ENCODE measurements at regions of chr5 and their contacts with region 1.

Region 1: GRCh38 chr5:75053304-75054133 is 1.2 kb upstream of the GCNT4 start:
- DNase-seq: peak; percentile 71
- H3K4me3 ChIP-seq: peak overlapping the region; percentile 53 to 92 (median 88)
- H3K27ac ChIP-seq: peak overlapping the region; percentile 94 to 96 (median 94)
- H3K4me1 ChIP-seq: peaks cover 0 to 51% (median 29%) of the 10 kb centered on the region in 4 donors
- H3K27me3 ChIP-seq: no peaks in the 10 kb centered on the region
- CTCF ChIP-seq: peak in 1 of 4 experiments; percentile 12
- EP300 ChIP-seq: no peak
- POLR2A ChIP-seq: peak; percentile 17 to 22

Region 2: DNA sequence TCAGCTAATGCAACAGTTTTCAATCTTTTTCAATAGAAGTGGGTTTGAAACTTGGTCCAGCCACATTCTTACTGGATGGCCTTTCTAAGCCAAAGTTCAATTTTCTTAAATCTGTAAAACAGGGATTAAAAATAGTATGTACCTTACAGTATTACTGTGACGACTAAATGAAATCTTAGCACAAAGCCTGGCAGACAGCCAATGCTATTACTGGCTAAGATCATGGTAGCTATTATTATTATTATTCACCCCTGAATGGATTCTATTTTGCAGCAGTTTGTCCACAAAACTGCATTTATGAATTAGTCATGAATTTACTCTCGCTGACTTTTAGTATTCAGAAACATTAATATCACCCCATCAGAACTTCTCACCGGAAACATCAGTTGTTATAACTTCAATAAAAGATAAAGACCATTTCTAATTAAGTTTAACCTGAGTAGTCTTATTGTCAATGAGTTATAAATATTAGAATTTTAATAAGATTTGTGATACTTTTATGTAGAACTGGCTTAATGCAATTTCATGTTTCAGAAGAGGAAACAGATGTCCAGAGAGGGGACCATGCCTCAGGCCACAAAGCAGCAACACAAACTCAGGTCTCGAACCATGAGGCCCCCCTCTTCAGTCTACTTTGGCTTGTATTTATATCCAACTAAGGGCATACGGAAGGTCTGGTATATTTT is 959.3 kb before region 1 on chr5:
- intact Hi-C with region 1: no loop called
- DNase-seq: no peak
- H3K4me3 ChIP-seq: no peak overlapping the region
- H3K27ac ChIP-seq: no peak overlapping the region
- H3K4me1 ChIP-seq: peaks cover 0 to 7% (median 2%) of the 10 kb centered on the region in 4 donors
- H3K27me3 ChIP-seq: no peaks in the 10 kb centered on the region
- CTCF ChIP-seq: no peak
- EP300 ChIP-seq: no peak
- POLR2A ChIP-seq: no peak

Region 3: DNA sequence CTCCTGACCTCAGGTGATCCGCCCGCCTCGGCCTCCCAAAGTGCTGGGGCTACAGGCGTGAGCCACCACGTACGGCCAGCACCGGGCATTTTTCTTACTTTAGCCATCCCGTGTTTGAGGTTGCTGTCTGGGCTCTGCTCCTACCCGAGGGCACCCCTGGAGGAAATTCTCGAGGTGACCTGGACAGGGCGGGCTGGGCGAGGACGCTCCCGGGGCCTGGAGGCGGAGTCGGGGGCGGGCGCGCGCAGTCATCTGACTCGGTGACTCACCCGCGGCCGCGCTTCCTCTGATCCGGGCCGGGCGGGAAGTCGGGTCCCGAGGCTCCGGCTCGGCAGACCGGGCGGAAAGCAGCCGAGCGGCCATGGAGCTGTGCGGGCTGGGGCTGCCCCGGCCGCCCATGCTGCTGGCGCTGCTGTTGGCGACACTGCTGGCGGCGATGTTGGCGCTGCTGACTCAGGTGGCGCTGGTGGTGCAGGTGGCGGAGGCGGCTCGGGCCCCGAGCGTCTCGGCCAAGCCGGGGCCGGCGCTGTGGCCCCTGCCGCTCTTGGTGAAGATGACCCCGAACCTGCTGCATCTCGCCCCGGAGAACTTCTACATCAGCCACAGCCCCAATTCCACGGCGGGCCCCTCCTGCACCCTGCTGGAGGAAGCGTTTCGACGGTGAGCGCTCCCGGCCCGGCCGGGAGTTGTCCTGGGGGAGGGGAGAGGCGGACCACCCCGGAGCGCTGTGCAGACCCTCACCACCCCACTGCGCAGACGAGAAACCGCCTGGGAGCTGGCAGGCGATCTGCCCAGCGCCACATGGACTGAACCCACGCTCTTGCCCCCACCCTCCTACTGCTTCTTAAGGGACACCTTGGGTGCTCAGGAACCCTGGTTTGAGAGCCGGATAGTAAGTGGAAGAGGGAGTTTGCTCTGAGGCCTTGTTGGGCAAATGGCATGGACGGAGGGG is 368.3 kb before region 1 on chr5 and contains the start of gene HEXB:
- intact Hi-C with region 1: loop called (anchors 10 kb)
- DNase-seq: peak; percentile 95
- H3K4me3 ChIP-seq: peak within 1 kb of the TSS; percentile 70 to 96 (median 93)
- H3K27ac ChIP-seq: peak within 1 kb of the TSS; percentile 86 to 91 (median 90)
- H3K4me1 ChIP-seq: peaks cover 0 to 22% (median 16%) of the 10 kb centered on the region in 4 donors
- H3K27me3 ChIP-seq: no peaks in the 10 kb centered on the region
- CTCF ChIP-seq: no peak
- EP300 ChIP-seq: no peak
- POLR2A ChIP-seq: peak; percentile 54 to 67
- total RNA-seq, gene HEXB: 76.2 to 132 (median 108) TPM

Region 4: DNA sequence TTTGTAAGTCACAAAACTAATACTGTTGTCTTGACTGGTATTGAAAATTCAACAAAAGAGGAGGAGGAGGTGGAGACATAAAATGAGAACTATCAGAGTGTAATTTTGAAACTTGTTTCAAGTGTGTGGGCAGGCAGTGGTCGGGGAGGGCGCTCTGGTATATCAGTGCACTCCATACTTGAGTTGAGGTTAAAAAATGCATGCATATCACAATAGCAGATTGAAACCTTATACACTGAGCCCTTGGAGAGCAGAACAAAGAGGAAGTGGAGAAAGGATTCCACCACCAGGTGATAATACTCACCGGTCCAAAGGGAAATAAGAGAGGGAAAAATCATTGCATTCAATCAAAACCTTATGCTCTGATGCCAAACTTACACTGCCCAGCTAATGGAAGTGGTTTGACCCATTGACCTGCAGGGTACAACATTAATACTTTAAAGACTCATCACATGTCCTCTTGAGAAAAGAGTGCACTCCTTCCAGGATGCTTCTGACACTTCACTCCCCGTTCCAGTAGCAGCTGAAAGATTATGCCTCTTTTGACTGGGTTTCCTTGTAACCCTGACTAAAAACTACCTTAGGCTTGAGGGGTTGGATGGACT is 107.9 kb before region 1 on chr5:
- intact Hi-C with region 1: no loop called
- DNase-seq: no peak
- H3K4me3 ChIP-seq: no peak overlapping the region
- H3K27ac ChIP-seq: no peak overlapping the region
- H3K4me1 ChIP-seq: no peaks in the 10 kb centered on the region
- H3K27me3 ChIP-seq: no peaks in the 10 kb centered on the region
- CTCF ChIP-seq: no peak
- EP300 ChIP-seq: no peak
- POLR2A ChIP-seq: no peak

Region 5: GRCh38 chr5:75142566-75143136 is 89.1 kb after region 1 on chr5:
- intact Hi-C with region 1: no loop called
- DNase-seq: no peak
- H3K4me3 ChIP-seq: no peak overlapping the region
- H3K27ac ChIP-seq: no peak overlapping the region
- H3K4me1 ChIP-seq: no peaks in the 10 kb centered on the region
- H3K27me3 ChIP-seq: no peaks in the 10 kb centered on the region
- CTCF ChIP-seq: no peak
- EP300 ChIP-seq: no peak
- POLR2A ChIP-seq: no peak

Region 6: GRCh38 chr5:75236322-75237316 is 183.1 kb after region 1 on chr5 and contains the start of gene ANKRD31:
- intact Hi-C with region 1: loop called (anchors 2 kb)
- DNase-seq: peak; percentile 90
- H3K4me3 ChIP-seq: peak within 1 kb of the TSS; percentile 53 to 71 (median 60)
- H3K27ac ChIP-seq: peak within 1 kb of the TSS; percentile 71 to 79 (median 78)
- H3K4me1 ChIP-seq: peaks cover 0 to 9% (median 3%) of the 10 kb centered on the region in 4 donors
- H3K27me3 ChIP-seq: no peaks in the 10 kb centered on the region
- CTCF ChIP-seq: peak in 3 of 4 experiments; percentile 41 to 92 (median 50)
- EP300 ChIP-seq: no peak
- POLR2A ChIP-seq: peak in 1 of 2 donors; percentile 12
- total RNA-seq, gene ANKRD31: under 0.01 to 0.33 (median 0.28) TPM in 3 of 4 donors, not detected in the other

Region 7: DNA sequence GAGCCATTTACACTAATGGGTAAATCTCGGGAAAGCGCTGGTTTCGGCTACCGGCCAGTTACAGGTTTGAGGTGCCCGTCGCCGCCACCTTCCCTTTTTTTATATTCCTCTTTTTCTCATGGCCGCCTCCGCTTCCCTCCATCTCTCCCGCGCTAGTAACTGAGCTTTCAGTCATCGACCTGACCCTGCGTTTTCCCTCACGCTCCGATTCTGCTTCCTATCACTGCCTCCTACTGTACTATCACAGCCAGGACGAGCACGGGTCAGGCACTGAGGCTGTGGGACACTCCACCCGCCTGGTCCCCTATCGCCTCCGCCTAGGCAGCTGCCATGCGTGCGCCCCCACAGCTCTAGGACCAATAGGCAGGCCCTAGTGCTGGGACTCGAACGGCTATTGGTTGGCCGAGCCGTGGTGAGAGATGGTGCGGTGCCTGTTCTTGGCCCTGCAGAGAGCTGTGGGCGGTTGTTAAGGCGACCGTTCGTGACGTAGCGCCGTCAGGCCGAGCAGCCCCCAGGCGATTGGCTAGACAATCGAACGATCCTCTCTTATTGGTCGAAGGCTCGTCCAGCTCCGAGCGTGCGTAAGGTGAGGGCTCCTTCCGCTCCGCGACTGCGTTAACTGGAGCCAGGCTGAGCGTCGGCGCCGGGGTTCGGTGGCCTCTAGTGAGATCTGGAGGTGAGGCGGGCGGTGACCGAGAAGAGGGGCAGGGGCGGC is 283.3 kb after region 1 on chr5 and contains the start of gene HMGCR:
- intact Hi-C with region 1: loop called (anchors 2 kb)
- DNase-seq: peak; percentile 99
- H3K4me3 ChIP-seq: peak within 1 kb of the TSS; percentile 80 to 95 (median 88)
- H3K27ac ChIP-seq: peak within 1 kb of the TSS; percentile 90 to 98 (median 96)
- H3K4me1 ChIP-seq: peaks cover 0 to 19% (median 14%) of the 10 kb centered on the region in 4 donors
- H3K27me3 ChIP-seq: no peaks in the 10 kb centered on the region
- CTCF ChIP-seq: peak in 1 of 4 experiments; percentile 6
- EP300 ChIP-seq: no peak
- POLR2A ChIP-seq: peak; percentile 73 to 78
- total RNA-seq, gene HMGCR: 9.7 to 16.1 (median 12.2) TPM

Region 8: GRCh38 chr5:75681125-75681830 is 627.8 kb after region 1 on chr5:
- intact Hi-C with region 1: loop called (anchors 10 kb)
- DNase-seq: no peak
- H3K4me3 ChIP-seq: no peak overlapping the region
- H3K27ac ChIP-seq: peak overlapping the region in 3 of 4 donors; percentile 20 to 45 (median 23)
- H3K4me1 ChIP-seq: peaks cover 0 to 19% (median 6%) of the 10 kb centered on the region in 4 donors
- H3K27me3 ChIP-seq: no peaks in the 10 kb centered on the region
- CTCF ChIP-seq: peak; percentile 13 to 75 (median 59)
- EP300 ChIP-seq: no peak
- POLR2A ChIP-seq: no peak

Measured in sigmoid colon (tissue), 7 donors.